Activated CD4-positive, alpha-beta T cell treated with anti-CD3 and anti-CD28 coated beads, Interleukin-2, amount 10 ng/mL, durations not matched to agents 24 days and 14 days (primary cell): ENCODE measurements at regions of chr12 and their contacts with region 1.

Region 1: GRCh38 chr12:131710464-131711457 is at the start of gene SFSWAP:
- DNase-seq: peak; percentile 93
- H3K4me3 Mint-ChIP-seq: peak within 1 kb of the TSS; percentile 91
- H3K27ac Mint-ChIP-seq: peak within 1 kb of the TSS; percentile 92
- H3K4me1 Mint-ChIP-seq: peaks cover 23% of the 10 kb centered on the region
- H3K27me3 Mint-ChIP-seq: peaks cover 3% of the 10 kb centered on the region
- total RNA-seq, gene SFSWAP: 69.0 and 74.4 TPM in 2 replicates

Region 2: DNA sequence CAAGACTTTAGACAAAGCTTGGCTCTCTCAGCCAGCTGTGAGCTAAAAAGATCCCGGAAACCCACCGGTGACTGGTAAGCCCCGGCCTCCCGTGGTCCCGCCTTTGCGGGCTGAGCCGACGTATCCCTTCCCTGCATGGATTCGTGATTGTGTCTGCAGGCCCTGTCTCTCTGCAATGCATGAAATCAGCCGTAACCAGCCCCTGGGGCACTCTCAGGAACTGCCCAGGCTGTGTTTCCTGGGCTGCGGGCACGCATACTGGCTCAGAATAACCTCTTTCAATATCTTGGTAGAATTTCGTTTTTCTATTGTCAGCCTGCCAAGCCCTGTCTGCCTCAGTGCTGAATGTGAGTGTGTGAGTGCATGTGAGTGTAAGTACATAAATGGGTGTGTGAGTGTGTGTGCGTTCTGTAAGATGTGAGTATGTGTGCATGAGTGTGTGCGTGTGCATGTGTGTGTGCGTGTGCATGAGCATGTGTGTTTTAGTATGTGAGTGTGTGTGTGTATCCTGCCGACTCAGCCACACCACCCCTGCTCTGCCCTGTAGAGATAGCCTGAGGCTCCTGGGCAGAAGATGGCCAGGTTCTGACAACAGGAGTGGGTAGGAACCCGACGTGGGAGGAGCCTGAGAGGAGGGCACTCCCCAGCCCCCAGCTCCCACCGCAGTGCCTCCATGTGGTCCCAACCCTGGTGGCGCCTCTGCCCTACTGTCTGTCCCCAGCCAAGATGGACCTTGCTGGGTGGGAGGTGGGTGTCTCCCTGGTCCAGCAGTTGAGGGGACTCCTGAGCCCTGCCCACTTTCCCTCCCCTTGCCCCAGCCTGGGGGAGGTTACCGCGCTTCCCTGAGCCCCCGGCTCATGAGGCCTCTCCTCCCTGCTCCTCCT is 488.3 kb before region 1 on chr12:
- intact Hi-C with region 1: no loop called
- DNase-seq: peak; percentile 62
- H3K4me3 Mint-ChIP-seq: no peak overlapping the region
- H3K27ac Mint-ChIP-seq: no peak overlapping the region
- H3K4me1 Mint-ChIP-seq: peaks cover 6% of the 10 kb centered on the region
- H3K27me3 Mint-ChIP-seq: peaks cover 8% of the 10 kb centered on the region

Region 3: DNA sequence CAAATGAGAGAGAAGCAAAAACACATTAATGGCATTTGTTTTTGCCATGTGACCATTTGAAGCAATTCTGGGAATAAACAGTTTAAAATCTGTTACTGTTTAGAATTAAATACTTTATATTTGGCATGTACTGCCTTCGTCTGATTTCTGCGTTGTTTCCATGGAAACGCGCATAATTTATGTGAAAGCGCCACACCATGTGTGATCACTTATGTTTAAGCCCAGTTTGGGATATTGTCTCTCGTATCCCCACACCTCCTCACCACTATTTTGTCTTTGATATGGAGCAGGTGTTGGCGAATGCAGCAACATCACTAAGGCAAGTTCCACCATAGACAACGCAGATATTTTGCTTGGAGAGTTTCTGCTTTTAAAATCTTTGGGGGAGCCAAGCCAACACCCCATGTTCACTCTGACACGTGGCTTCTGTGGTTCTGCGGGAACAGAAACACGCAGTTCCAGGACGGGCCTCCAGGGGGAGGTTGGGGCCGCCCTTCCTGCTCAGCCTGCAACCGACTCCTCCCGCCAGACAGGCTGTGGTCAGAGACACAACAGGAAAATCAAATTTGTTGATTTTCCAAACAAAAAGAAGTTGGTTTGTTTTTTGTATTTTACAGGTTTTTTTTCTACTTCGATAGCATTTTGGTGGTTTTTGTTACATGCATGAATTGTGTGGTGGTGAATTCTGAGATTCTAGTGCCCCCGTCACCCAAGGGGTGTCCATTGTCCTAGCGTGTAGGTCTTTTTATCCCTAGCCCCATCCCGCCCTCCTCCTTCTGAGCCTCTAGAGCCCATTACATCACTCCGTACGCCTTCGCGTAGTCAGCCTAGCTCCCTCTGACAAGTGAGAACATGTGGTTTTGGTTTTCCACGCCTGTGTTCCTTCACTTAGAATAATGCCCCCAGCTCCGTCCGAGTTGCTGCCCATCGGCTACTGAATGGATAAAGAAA is 101.7 kb before region 1 on chr12:
- intact Hi-C with region 1: loop called (anchors 5 kb)
- DNase-seq: peak; percentile 87
- H3K4me3 Mint-ChIP-seq: no peak overlapping the region
- H3K27ac Mint-ChIP-seq: peak overlapping the region; percentile 48
- H3K4me1 Mint-ChIP-seq: peaks cover 46% of the 10 kb centered on the region
- H3K27me3 Mint-ChIP-seq: no peaks in the 10 kb centered on the region

Region 4: DNA sequence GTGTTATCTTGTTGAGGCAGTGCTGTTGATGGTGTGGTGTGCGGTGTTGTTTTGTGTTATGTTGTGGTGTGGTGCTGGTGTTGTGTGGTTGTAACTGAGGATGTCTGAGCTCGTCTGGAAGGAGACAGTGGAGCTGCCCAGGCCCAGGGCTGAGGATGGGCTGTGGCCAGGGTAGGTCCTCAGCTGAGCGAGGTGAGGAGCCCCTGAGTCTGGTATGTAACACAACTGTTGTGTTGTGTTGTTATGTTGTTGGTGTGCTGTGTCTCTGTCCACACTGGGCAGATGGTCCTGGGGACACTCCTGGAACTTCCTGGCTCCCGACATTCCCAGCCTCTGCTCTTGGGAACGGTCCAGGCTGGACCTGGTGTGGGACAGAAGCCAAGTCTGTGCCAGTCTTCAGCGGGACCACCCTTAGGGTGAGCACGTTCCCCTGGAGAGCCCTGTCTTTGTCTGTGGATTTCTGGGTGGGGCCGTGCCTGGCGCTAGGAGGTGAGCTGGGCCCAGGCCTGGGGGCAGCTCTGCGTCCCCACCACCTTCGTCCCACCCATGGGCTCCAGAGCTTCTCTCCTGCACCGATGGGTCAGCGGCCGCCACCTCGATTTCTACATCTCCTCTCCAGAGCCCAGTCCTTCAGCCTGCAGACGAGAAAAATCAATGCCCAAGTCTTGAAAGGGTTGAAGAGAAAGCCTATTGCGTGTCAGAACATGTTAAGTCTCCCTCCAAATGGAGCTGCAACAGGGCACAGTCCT is 27.3 kb before region 1 on chr12:
- intact Hi-C with region 1: loop called (anchors 2 kb)
- DNase-seq: no peak
- H3K4me3 Mint-ChIP-seq: no peak overlapping the region
- H3K27ac Mint-ChIP-seq: peak overlapping the region; percentile 75
- H3K4me1 Mint-ChIP-seq: peaks cover 16% of the 10 kb centered on the region
- H3K27me3 Mint-ChIP-seq: peaks cover 3% of the 10 kb centered on the region

Region 5: DNA sequence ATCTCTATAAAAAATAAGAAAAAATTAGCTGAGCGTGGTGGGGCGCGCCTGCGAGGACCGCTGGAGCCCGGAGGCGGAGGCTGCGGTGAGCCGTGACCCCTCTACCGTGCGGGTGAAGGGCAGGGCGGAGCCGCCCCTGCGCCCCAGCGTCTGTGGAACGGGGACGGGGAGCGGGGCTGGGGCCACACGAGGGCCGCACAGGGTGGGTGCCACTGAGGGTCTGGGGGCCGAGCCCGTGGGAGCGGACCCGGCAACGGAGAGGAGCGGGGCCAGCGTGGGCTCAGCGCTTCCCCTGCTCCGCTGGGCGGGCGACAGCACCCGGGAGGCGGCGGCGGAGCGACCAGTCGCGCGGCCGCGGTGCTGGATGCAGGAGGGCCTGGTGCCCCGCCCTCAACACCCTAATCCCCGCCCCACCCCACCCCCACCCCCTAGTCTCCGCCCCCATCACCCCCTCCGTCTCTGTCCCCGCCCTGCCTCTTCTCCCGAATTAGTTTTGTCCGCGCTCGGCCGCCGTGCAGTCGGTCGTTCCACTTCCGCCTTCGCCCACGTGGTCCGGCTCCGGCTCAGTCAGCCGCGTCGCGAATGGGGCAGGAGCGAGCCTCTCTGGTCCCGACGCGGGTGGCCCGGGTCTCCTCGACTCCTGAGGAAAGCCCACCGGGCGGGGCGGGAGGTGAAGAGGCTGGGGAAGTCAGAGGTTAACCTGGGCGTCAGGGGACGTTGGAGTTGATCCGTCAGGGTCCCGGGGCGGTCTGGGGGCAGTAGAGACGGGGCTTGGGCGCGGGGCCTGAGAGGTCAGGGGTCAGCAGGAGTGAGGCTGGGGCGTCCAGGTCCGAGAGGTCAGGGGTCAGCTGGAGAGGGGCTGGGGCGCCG is 218.2 kb after region 1 on chr12 and contains the start of gene PUS1:
- intact Hi-C with region 1: no loop called
- DNase-seq: peak; percentile 98
- H3K4me3 Mint-ChIP-seq: peak within 1 kb of the TSS; percentile 94
- H3K27ac Mint-ChIP-seq: peak within 1 kb of the TSS; percentile 92
- H3K4me1 Mint-ChIP-seq: peaks cover 15% of the 10 kb centered on the region
- H3K27me3 Mint-ChIP-seq: no peaks in the 10 kb centered on the region
- total RNA-seq, gene PUS1: 91.6 and 97.0 TPM in 2 replicates